Prostate gland (tissue), 2 donors: ENCODE measurements at regions of chr15 and their contacts with region 1.

Region 1: DNA sequence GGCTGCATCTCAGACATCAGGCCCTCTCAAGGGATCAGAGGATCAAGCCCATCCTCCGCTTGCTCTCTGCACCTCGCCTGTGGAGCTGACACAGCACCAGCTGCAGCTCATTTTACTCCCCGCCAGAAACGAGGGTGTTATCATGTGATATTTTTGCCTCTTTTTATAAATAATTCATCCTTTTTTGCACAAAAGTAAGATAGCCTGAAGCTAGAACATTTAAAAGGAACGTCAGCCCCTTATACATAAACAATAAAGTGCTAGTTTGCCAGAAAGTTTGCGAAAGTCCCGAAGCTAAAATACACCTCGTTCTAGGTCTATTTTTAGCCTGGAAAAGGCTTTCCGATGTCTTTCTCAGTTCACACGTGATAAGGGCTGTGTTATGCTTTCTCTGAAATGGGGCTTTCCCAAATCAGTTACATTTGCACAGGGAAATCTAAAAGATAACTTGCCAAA is 9.6 kb upstream of the FAM174B start:
- DNase-seq: no peak
- H3K4me3 ChIP-seq: no peak overlapping the region
- H3K27ac ChIP-seq: peak overlapping the region in 1 of 2 donors; percentile 26
- H3K4me1 ChIP-seq: peaks cover 7% of the 10 kb centered on the region
- H3K27me3 ChIP-seq: no peaks in the 10 kb centered on the region
- CTCF ChIP-seq: no peak
- POLR2A ChIP-seq: no peak

Region 2: GRCh38 chr15:92527197-92527596 is 137.9 kb before region 1 on chr15:
- intact Hi-C with region 1: loop called (anchors 5 kb)
- DNase-seq: peak; percentile 90
- H3K4me3 ChIP-seq: no peak overlapping the region
- H3K27ac ChIP-seq: peak overlapping the region; percentile 38 to 75
- H3K4me1 ChIP-seq: peaks cover 6% of the 10 kb centered on the region
- H3K27me3 ChIP-seq: no peaks in the 10 kb centered on the region
- CTCF ChIP-seq: no peak
- POLR2A ChIP-seq: no peak

Region 3: DNA sequence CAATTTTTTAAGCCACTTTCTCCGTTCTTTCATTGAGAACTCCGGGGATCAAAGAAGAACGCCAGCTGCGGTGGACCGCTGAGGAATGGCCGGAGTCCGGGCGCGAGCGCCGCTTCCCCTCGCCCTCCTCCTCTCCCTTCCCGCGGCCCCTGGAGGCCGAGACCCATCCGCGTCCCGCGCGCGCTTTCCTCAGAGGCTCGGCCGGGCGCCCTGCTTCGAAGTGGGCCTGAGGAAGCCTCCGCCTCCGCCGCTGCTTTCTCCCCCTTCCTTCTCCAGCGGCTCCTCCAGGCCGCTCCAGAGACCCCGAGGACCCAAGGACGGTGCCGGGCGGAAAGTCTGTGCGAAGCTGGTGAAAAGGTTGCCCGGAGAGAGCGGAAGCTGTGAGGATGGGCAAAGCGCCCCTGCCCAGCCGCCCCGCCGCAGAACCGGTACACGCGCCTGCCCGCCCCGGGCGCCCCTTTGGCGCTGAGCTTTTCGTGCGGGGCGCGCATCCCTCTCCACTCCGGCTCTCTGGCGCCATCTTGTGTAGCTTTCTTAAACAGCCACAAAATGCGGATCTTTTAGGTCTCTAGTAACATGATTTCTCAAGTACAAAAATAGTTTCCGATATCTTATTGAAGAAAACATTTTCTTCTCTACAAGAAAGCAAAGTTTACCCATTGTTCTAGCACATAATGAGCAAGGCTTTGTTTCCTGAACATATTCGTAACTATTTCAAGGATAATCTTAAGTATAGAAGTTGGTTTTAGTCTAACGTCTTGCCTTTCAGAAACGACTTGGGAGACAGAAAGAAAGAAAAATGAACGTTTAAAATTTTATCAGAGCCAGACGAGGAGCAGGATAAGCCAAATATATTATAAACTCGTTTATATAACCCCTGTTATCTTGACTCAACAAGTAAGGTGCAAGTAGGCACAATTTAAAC is 49.6 kb after region 1 on chr15:
- intact Hi-C with region 1: loop called (anchors 10 kb)
- DNase-seq: peak; percentile 74
- H3K4me3 ChIP-seq: peak overlapping the region; percentile 35 to 56
- H3K27ac ChIP-seq: peak overlapping the region; percentile 73 to 79
- H3K4me1 ChIP-seq: no peaks in the 10 kb centered on the region
- H3K27me3 ChIP-seq: no peaks in the 10 kb centered on the region
- CTCF ChIP-seq: peak; percentile 59 to 92 (median 92)
- POLR2A ChIP-seq: peak; percentile 19